Activated CD4-positive, alpha-beta memory T cell treated with anti-CD3 and anti-CD28 coated beads for 36 hours (primary cell): ENCODE measurements at regions of chr6 and their contacts with region 1.

Region 1: DNA sequence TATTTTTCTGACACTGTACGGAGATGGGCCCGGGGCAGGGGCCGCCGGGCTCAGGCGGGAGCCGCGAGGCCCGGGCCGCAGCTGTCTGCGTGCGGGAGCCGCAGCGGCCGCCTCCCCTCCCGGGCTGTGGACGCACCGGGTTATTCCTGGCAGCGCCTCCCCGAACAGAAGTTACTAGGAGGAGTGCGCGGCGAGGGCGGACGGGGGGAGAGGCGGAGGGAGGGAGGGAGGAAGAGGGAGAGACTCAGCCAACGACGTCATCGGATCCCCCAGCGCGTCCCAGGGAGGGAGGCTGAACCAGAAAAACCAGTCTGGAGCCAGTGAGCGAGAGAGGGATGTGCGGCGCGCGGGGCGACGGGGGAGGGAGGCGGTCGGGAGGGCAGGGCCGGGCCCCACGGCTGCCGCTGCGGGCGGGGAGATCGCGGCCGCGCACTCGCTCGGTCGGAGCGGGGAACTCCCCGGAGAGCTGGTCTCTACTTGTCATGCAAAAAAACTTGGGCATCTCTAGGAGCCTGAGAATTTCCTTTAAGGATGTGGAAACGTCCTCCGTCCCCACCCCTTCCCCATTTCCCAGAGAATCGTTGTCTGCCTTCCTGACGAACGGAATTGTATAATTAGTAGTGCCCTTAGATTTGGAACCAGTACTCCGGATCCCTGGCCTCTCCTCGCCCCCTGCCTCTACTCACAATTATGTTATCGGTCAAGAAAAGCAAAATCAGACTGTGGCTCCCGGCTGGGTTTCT is 1.4 kb upstream of the HIVEP2 start:
- DNase-seq: peak; percentile 96
- H3K4me3 Mint-ChIP-seq: peak overlapping the region; percentile 96
- H3K27ac Mint-ChIP-seq: peak overlapping the region; percentile 99
- H3K4me1 Mint-ChIP-seq: peaks cover 28% of the 10 kb centered on the region
- H3K27me3 Mint-ChIP-seq: peaks cover 2% of the 10 kb centered on the region

Region 2: DNA sequence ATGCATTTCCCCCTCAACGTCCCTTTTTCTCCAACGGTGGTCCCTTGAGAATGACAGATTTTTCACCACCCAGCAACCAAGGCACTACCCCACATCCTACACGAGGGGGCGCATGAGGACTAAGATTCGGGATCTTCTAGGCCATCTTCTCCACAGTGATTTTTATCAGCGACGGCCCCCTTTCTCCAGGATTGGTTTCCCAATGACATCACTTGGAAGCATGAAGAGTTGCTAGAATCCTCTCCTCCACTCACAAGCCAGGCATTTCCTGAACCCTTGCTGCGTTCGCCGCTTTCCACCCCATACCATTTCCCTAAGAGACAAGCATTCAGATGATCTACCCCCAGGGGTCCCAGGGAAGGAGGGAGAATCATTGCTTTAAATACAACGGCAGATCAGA is 253.4 kb before region 1 on chr6:
- CTCF ChIA-PET with region 1: interaction called, 4 read pairs
- POLR2A ChIA-PET with region 1: no interaction called
- intact Hi-C with region 1: loop called (anchors 5 kb)
- DNase-seq: peak; percentile 72
- H3K4me3 Mint-ChIP-seq: no peak overlapping the region
- H3K27ac Mint-ChIP-seq: no peak overlapping the region
- H3K4me1 Mint-ChIP-seq: peaks cover 15% of the 10 kb centered on the region
- H3K27me3 Mint-ChIP-seq: no peaks in the 10 kb centered on the region

Region 3: DNA sequence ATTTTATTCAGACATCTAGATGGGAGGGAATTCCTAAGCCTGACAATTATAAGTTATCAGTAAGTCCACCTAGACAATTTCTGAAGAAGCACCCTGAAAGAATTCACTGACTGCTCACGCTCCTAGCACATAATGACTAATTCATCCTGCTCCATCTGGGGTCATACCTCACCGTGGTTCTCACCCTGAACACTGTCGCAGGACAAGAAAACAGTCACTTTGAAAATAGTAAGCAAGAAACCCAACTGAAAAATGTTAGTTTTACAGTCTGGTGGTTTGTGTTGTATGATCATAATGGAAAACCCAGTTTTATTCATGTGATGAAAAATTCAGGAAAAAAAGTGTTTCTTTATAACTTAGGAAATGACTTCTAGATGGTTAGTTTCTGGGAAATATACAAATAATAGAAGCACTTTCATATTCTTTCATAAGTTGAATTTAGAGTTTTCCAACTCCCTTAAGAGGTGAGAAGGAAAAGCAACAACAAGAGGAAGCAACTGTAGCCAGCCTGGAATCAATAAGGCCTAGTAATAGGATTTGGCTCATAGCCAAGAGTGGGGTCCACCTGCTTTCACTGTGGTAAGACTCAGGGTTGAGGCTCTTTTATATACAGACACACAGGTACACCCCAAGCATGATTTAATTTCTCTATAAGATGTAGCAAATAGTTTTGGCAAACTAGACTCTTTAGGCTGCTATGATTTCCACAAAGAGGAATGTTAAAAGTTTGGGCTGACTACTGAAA is 95.5 kb before region 1 on chr6:
- CTCF ChIA-PET with region 1: interaction called, 12 read pairs
- POLR2A ChIA-PET with region 1: interaction called, 9 read pairs
- intact Hi-C with region 1: no loop called
- DNase-seq: peak; percentile 71
- H3K4me3 Mint-ChIP-seq: peak overlapping the region; percentile 58
- H3K27ac Mint-ChIP-seq: peak overlapping the region; percentile 94
- H3K4me1 Mint-ChIP-seq: peaks cover 97% of the 10 kb centered on the region
- H3K27me3 Mint-ChIP-seq: no peaks in the 10 kb centered on the region

Region 4: DNA sequence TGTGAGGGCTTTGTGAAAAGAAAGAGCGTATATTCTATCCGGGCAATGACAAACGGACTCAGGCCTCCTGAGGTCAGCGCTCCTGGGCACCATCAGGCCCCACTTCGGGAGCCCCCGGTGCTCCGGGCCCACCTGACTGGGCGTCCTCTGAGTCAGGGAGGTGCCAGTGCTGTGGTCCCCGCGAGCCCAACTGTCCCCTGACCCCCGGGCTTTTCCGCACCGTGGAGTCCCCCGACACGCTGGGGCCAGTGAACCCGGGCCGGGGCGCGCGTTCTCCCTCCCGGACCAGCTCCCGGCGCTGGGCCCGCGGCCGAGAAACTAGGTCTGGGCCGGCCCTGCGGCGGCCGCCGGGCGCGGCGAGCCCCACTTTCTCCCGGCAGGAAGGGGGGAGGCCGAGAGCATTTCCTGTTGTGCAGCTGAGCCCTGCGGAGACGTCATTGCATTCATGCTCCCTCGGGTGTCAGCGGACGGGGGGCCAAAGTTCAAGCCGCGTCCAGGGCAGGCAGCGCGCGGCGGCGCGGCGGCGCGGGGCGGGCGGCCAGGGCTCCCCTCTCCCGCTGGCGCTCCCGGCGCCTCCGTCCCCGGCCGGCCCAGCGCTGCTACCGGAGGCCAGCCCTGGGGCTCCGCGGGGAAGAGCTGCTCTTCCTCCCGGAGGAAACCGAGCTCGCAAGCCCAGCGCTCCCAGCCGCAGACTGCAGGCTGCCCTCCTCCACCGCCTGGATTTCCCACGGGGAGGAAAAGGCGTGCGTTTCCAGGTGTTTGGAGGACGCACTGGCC is 19.7 kb before region 1 on chr6:
- CTCF ChIA-PET with region 1: interaction called, 5 read pairs
- POLR2A ChIA-PET with region 1: interaction called, 20 read pairs
- intact Hi-C with region 1: loop called (anchors 1 kb)
- DNase-seq: peak; percentile 83
- H3K4me3 Mint-ChIP-seq: peak overlapping the region; percentile 83
- H3K27ac Mint-ChIP-seq: peak overlapping the region; percentile 91
- H3K4me1 Mint-ChIP-seq: peaks cover 55% of the 10 kb centered on the region
- H3K27me3 Mint-ChIP-seq: no peaks in the 10 kb centered on the region

Region 5: GRCh38 chr6:143505111-143505510 is 558.8 kb after region 1 on chr6:
- CTCF ChIA-PET with region 1: no interaction called
- POLR2A ChIA-PET with region 1: no interaction called
- intact Hi-C with region 1: loop called (anchors 1 kb)
- DNase-seq: no peak
- H3K4me3 Mint-ChIP-seq: no peak overlapping the region
- H3K27ac Mint-ChIP-seq: peak overlapping the region; percentile 64
- H3K4me1 Mint-ChIP-seq: peaks cover 16% of the 10 kb centered on the region
- H3K27me3 Mint-ChIP-seq: no peaks in the 10 kb centered on the region

Region 6: GRCh38 chr6:144349690-144350527 is 1403.6 kb after region 1 on chr6:
- CTCF ChIA-PET with region 1: no interaction called
- POLR2A ChIA-PET with region 1: no interaction called
- intact Hi-C with region 1: loop called (anchors 10 kb)
- DNase-seq: no peak
- H3K4me3 Mint-ChIP-seq: peak overlapping the region; percentile 59
- H3K27ac Mint-ChIP-seq: peak overlapping the region; percentile 82
- H3K4me1 Mint-ChIP-seq: peaks cover 85% of the 10 kb centered on the region
- H3K27me3 Mint-ChIP-seq: no peaks in the 10 kb centered on the region